WTC11 (cell line): ENCODE measurements at regions of chr2 and their contacts with region 1.

Region 1: DNA sequence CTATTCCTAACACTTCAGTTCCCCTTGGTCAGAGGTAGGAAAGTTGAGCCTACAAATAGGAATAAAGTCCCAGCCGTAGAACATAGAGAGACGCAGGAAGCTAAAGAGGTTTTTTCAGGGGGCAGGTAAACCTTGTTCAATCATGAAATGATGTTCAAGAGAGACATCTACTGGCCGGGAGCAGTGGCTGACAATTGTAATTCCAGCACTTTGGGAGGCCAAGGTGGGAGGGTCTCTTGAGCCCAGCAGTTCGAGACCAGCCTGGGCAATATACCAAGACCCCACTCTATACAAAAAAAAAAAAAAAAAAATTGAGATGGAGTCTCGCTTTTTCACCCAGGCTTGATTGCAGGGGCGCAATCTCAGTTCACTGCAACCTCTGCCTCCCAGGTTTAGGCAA is 66.7 kb upstream of the DNAJC10 start:
- DNase-seq: peak; percentile 53
- ATAC-seq: peak; percentile 92
- H3K4me3 Mint-ChIP-seq: no peak overlapping the region
- H3K27ac Mint-ChIP-seq: no peak overlapping the region
- H3K4me1 Mint-ChIP-seq: peaks cover 12% of the 10 kb centered on the region
- H3K27me3 Mint-ChIP-seq: no peaks in the 10 kb centered on the region
- CTCF ChIP-seq: peak; percentile 43

Region 2: DNA sequence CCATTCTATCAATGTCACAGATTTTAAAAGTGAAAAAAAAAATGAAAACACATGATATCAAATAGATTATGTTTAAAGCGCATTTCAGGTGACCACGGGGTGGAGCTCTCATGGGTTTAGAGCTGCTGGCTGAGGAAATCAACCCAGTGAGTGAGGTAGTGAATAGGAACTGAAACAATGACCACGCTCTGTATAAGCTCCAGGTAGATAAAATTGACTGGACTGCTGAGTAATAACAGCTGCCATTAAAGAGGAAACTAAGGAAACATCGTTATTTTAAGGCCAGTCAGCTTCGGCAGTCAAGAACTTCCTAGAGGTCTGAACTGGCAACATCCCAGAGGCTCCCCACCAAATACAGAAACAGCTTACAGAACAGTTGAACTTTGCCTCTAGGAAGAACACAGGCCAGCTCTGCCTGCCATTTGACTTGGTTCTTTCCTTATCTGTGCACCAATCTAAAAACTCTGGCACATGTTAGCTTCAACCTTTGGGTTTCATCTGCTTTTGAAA is 408.4 kb before region 1 on chr2:
- CTCF ChIA-PET with region 1: interaction called, 41 read pairs
- POLR2A ChIA-PET with region 1: no interaction called
- DNase-seq: peak; percentile 31
- ATAC-seq: peak; percentile 92
- H3K4me3 Mint-ChIP-seq: no peak overlapping the region
- H3K27ac Mint-ChIP-seq: no peak overlapping the region
- H3K4me1 Mint-ChIP-seq: peaks cover 15% of the 10 kb centered on the region
- H3K27me3 Mint-ChIP-seq: no peaks in the 10 kb centered on the region
- CTCF ChIP-seq: no peak

Region 3: DNA sequence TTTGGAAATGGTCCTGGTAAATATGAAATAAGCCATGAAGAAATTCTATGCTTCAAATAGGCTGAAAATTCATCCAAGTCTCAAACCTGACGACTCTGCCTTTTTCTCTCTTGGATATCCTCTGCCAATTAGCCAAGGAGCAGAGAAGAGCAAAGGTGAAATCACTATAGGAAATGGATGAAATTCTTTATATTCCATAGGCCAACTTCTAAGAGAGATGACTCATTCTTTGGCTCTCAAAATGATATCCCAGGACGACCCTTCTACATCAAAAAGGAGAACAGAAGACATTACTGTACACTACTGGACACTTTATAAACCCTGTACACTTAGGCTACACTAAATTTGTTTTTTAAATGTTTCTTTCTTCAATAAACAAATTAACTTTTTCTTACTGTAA is 245.2 kb before region 1 on chr2:
- CTCF ChIA-PET with region 1: no interaction called
- POLR2A ChIA-PET with region 1: no interaction called
- DNase-seq: no peak
- ATAC-seq: no peak
- H3K4me3 Mint-ChIP-seq: no peak overlapping the region
- H3K27ac Mint-ChIP-seq: no peak overlapping the region
- H3K4me1 Mint-ChIP-seq: 0 out of 2 replicates have a peak, but pooled peaks cover 3% of the 10 kb centered on the region
- H3K27me3 Mint-ChIP-seq: no peaks in the 10 kb centered on the region
- CTCF ChIP-seq: no peak

Region 4: DNA sequence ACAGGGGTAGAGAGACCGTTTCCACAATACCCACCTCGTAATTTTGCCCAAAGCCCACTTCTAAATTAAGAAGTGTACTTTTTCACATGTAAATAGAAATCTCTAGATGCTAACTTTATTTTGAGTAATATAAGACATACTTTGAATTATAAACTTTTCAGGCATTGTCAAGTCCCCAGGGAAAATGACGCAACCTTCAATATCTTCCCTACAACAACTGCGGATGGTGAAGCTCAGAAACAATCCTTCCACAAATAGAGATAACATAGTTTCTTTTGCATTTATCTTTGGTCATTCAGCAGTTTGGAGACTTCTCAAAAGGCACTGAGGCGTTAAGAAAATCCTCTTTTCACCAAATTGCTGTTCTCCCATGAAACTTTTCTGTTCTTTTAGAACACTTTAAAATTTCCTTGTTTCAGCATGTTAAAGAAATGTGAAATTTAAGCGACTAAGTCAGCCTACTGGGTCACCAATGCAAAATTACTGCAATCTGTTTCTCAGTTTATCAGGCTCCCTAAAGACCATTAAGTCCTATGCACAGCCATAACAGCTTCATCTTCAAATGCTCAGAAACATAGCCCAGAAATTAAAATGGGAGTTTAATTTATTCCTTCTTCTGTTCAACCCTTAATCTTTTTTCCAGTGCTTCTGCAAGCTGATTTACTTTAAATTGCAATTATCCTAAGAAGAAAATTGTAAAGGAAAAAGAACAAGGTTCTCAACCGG is 51.6 kb before region 1 on chr2:
- CTCF ChIA-PET with region 1: no interaction called
- POLR2A ChIA-PET with region 1: no interaction called
- DNase-seq: no peak
- ATAC-seq: no peak
- H3K4me3 Mint-ChIP-seq: no peak overlapping the region
- H3K27ac Mint-ChIP-seq: no peak overlapping the region
- H3K4me1 Mint-ChIP-seq: peaks cover 32% of the 10 kb centered on the region
- H3K27me3 Mint-ChIP-seq: no peaks in the 10 kb centered on the region
- CTCF ChIP-seq: no peak

Region 5: DNA sequence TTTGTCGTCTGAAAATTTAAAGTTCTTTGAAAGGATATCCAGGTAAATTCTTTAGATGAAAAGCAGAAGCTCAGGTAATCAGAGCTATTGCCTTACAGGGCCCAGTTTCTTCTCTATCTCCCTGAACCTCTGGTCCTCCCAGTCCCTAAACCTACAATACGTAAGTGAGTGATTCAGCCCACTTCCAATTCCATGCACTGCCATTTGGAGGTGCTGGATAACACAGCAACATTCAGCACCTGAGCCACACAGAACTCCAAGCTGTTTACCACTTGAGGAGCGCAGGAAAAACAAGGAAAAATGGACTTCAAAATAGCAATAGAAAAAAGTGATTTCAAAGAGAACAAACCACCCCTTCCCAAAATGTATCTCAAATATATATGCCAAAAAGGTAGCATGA is 38.3 kb before region 1 on chr2:
- CTCF ChIA-PET with region 1: interaction called, 11 read pairs
- POLR2A ChIA-PET with region 1: interaction called, 3 read pairs
- DNase-seq: peak; percentile 26
- ATAC-seq: peak; percentile 97
- H3K4me3 Mint-ChIP-seq: no peak overlapping the region
- H3K27ac Mint-ChIP-seq: no peak overlapping the region; the same call in 1 of the 2 replicates
- H3K4me1 Mint-ChIP-seq: 0 out of 2 replicates have a peak, but pooled peaks cover 2% of the 10 kb centered on the region
- H3K27me3 Mint-ChIP-seq: no peaks in the 10 kb centered on the region
- CTCF ChIP-seq: no peak